ENCODE measurements at regions of chr1 and their contacts with region 1.

Region 1: GRCh38 chr1:55215256-55216021 is at the start of gene USP24:
- DNase-seq: peak; percentile 91
- total RNA-seq, gene USP24: 45.1 TPM

Region 2: DNA sequence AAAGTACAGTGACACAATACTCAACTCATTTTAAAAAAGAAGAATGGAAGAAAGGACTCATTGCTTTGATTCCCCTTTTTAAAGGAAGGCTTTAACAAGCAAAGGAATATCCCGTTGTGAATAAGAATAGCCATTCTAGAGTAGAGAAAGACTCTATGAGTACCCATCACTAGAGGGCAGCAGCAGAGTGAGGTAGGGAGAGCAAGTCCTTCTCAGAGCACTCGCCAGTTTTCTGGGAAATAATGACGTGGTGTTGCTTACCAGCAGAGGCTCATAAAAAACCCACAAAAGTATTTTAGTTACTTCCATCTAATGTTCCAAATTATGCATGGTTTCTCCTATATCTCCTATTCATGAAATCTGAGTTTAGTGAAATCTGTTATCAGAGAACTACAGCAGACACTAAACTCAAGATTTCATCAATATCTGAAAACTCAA is 74.9 kb before region 1 on chr1:
- intact Hi-C with region 1: loop called (anchors 5 kb)
- DNase-seq: no peak

Region 3: DNA sequence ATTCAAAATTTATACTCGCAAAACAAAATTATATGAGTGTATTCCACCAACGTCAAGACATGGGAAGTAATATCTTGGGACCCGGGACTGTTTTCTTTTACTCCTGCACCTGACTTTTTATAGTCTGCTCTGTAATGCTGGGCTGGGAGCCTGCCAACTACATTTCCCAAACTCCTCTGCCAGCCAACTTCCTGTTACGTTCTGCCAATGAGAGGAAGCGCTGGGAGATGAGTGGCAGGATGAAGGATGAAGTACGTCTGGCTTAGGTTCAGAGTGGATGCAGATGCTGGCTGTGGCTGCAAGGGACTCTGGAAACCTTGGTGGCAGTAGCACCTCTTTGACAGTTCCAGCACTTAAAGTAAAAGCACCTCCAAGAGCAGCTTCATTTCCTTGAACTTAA is 59.9 kb before region 1 on chr1:
- intact Hi-C with region 1: loop called (anchors 5 kb)
- DNase-seq: peak; percentile 82

Region 4: GRCh38 chr1:55250399-55251075 is 35.1 kb after region 1 on chr1:
- intact Hi-C with region 1: loop called (anchors 1 kb)
- DNase-seq: no peak

Region 5: GRCh38 chr1:55277377-55278130 is 62.1 kb after region 1 on chr1:
- intact Hi-C with region 1: loop called (anchors 5 kb)
- DNase-seq: peak; percentile 80

Region 6: DNA sequence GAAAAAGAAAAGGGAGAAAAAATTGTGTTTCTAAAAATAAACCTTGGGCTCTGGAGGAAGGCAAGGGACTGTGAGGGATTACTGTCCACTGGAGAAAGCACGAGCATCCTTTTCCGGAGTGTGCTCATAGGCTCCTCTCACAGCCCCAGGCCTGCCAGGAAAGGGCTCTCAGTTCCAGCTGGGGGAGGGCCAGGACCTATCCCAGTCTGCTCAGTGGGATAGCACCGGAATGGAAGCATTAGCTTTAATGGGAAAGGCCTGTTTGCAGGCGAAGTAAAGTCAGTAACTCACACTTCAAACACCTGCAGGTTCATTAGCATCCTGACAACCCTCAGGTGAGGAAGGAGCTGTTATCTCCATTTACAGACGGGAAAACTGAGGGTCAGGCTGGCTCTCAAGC is 113.7 kb after region 1 on chr1:
- intact Hi-C with region 1: no loop called
- DNase-seq: no peak

Measured in cardiac septum (tissue), 1 donor.